Left cardiac atrium (tissue), 4 donors: ENCODE measurements at regions of chr16 and their contacts with region 1.

Region 1: DNA sequence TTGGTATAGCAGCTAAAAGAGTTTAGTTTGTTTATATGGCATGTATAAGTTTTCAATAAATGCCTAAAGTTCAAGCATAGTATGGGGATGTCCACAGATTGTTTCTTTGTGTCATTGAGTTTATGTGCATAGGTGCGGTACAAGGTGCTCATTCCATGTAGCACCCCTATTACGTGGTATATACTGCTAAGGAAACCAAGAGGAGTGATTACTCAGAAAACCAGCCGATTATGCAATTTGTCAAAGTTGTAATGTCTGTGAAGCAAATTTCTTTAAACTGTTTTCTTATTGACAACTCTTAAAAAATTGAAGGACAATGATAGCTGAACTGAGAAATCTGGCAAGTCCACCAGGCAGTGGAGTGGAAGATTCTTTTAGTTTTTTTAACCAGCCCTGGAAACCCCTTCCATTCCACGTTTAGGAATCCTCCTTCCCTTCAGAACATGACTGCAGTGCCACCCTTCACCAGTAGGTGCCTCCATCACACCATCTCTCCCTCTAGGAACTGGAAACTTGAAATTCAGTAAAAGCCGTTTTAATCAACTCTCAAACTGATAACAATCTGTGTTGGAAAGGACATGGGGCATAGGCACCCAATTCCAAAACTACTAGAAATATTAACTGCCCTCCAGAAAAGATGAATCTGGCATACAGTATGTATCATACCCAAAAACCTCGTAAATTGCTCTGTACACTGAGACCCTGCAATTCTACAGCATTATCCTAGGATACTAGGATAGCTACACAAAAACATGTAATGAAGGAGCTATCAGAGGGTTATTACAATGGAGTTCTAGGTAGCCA is 43.5 kb downstream of the REXO5 start:
- DNase-seq: peak; percentile 69
- ATAC-seq: peak; percentile 11 to 13

Region 2: DNA sequence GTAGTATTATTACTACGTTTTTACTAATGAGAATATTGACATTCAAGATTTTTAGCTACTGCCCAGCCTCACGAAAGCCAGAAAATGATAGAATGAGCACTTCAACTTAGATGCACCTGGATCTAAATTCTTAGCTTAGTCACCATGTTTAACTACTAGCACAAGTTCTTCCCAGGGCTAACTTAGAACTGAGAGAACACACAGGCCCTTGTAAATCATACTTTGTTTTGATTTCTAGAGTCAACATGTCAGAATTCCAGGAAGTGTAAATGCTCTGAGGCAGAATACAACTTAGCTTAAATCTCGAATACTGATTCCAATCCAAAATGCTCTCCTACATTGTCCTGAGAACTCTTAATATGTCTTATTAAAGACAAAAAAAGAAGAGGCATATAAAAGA is 145.5 kb before region 1 on chr16:
- intact Hi-C with region 1: no loop called
- DNase-seq: no peak
- ATAC-seq: no peak

Region 3: GRCh38 chr16:20900299-20901067 is 50.7 kb after region 1 on chr16 and contains the starts of genes DCUN1D3 and LYRM1:
- intact Hi-C with region 1: loop called (anchors 5 to 10 kb)
- DNase-seq: peak; percentile 97
- ATAC-seq: peak; percentile 92 to 94
- total RNA-seq, gene DCUN1D3: 15.6 to 27.4 TPM
- total RNA-seq, gene LYRM1: 32.6 TPM

Region 4: GRCh38 chr16:21083729-21084268 is 234.0 kb after region 1 on chr16:
- intact Hi-C with region 1: loop called (anchors 1 to 5 kb)
- DNase-seq: peak; percentile 77
- ATAC-seq: peak; percentile 93 to 94

Region 5: GRCh38 chr16:21088646-21089538 is 239.1 kb after region 1 on chr16:
- intact Hi-C with region 1: loop called (anchors 1 to 5 kb)
- DNase-seq: no peak
- ATAC-seq: no peak